ENCODE measurements at regions of chr20 and their contacts with region 1.

Region 1: GRCh38 chr20:53915446-53916172 is 154.8 kb downstream of the BCAS1 start:
- DNase-seq: peak; percentile 97
- H3K4me3 ChIP-seq: peak overlapping the region; percentile 42 to 73 (median 55)
- H3K27ac ChIP-seq: peak overlapping the region; percentile 87 to 96 (median 92)
- H3K4me1 ChIP-seq: peaks cover 26 to 50% (median 39%) of the 10 kb centered on the region in 6 donors
- H3K27me3 ChIP-seq: no peaks in the 10 kb centered on the region
- CTCF ChIP-seq: peak; percentile 93 to 100 (median 99)
- POLR2A ChIP-seq: no peak

Region 2: GRCh38 chr20:53578492-53579222 is 337.0 kb before region 1 on chr20:
- intact Hi-C with region 1: loop called (anchors 10 kb)
- DNase-seq: no peak
- H3K4me3 ChIP-seq: peak overlapping the region in 7 of 8 donors; percentile 28 to 66 (median 31)
- H3K27ac ChIP-seq: peak overlapping the region; percentile 74 to 100 (median 99)
- H3K4me1 ChIP-seq: peaks cover 65 to 100% (median 92%) of the 10 kb centered on the region in 6 donors
- H3K27me3 ChIP-seq: no peaks in the 10 kb centered on the region
- CTCF ChIP-seq: peak; percentile 69 to 98 (median 89)
- POLR2A ChIP-seq: no peak

Region 3: GRCh38 chr20:53809183-53809582 is 106.4 kb before region 1 on chr20:
- intact Hi-C with region 1: no loop called
- DNase-seq: no peak
- H3K4me3 ChIP-seq: no peak overlapping the region
- H3K27ac ChIP-seq: no peak overlapping the region
- H3K4me1 ChIP-seq: no peaks in the 10 kb centered on the region
- H3K27me3 ChIP-seq: no peaks in the 10 kb centered on the region
- CTCF ChIP-seq: no peak
- POLR2A ChIP-seq: no peak

Measured in spleen (tissue), 13 donors.